Heart right ventricle (tissue), 16 donors: ENCODE measurements at regions of chr14 and their contacts with region 1.

Region 1: DNA sequence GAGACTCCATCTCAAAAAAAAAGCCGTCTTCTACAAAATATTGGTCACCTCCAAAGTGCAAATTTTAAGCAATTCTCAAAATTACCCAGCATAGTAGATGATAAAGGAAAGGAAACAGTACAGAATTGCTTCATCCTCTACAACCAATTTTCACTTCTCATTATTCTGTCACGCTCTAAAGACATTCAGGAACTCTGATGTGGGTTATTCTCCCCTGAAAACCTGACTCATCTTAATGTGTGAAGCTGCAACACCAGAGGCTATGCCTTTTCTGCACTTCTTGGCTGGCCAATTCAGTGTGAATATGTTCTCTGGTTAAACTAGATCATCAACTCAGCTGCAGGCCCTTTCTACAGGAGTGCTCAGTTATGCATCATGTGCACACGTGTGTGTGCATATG is 11.0 kb downstream of the PTGER2 start:
- DNase-seq: no peak
- ATAC-seq: peak in 4 of 8 donors; percentile 23 to 79 (median 30)
- H3K4me3 ChIP-seq: peak overlapping the region in 1 of 10 donors; percentile 12
- H3K27ac ChIP-seq: peak overlapping the region in 1 of 10 donors; percentile 42
- H3K4me1 ChIP-seq: peaks cover 0 to 48% (median 0%) of the 10 kb centered on the region in 9 donors
- H3K27me3 ChIP-seq: no peaks in the 10 kb centered on the region
- CTCF ChIP-seq: no peak

Region 2: DNA sequence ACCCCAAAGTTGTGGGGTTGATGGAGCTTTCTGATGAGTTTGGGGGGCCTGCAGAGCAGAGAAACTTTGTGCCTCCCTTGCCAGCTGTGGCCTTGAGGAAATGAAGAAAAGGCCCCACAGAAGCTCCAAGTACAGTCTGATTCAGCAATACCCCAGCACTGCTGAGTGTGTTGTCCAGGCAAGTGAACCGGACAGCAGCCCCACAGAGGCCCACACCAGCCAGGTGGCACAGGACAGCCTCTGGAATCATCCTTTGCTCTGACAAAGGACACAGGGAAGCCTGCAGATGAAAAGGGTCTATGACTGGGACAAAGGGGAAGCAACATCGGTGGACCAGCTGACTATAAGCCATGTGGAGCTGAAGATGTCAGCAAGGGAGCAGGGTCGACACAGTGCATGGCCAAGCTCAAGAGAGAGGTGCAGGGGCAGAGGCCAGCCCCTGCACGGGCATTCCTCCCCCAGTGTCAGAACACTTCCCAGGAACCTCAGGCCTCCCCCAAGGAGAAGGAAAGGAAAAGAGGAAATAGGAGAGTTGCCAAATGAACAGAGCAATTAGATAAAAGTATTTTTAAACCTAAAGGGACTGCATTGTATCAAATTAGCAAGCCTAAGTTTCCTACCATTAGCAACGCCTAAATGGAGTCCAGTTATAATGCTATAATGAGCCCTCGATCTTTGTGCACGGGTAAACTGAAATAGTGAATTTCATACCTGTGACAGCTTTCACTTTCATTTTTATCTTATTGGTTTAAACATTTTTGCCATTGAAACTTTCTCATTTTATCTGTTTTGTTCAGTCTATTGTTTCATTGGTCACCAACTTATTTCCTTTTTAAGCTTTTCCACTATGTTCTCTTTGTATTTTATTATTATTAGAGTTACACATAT is 104.0 kb before region 1 on chr14:
- intact Hi-C with region 1: no loop called
- DNase-seq: no peak
- ATAC-seq: peak in 2 of 8 donors; percentile 33 to 47
- H3K4me3 ChIP-seq: peak overlapping the region in 7 of 10 donors; percentile 1 to 43 (median 35)
- H3K27ac ChIP-seq: peak overlapping the region in 3 of 10 donors; percentile 6 to 46 (median 41)
- H3K4me1 ChIP-seq: peaks cover 0 to 14% (median 0%) of the 10 kb centered on the region in 9 donors
- H3K27me3 ChIP-seq: no peaks in the 10 kb centered on the region
- CTCF ChIP-seq: no peak

Region 3: DNA sequence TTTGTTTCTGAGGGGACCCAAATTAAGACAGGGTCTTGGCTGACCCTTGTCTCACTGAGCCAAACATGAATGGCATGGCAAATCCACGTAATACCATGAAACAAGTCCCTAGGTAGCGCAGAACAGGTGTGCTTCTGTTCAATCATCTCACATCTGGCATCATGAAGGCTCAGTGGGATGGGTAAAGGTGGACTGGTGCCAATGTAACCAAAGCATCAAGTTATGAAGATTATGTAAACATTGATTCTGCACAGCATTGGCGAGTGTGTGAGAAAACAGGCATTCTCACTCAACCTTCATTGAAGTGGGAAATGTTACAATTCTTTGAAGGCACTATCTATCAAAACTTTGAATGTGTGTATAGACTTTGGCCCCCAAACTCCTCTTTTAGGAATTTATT is 30.9 kb after region 1 on chr14:
- intact Hi-C with region 1: loop called in 1 of 10 experiments (anchors 1 kb)
- DNase-seq: no peak
- ATAC-seq: no peak
- H3K4me3 ChIP-seq: no peak overlapping the region
- H3K27ac ChIP-seq: peak overlapping the region in 1 of 10 donors; percentile 58
- H3K4me1 ChIP-seq: peaks cover 0 to 39% (median 11%) of the 10 kb centered on the region in 9 donors
- H3K27me3 ChIP-seq: peaks cover 0 to 78% (median 0%) of the 10 kb centered on the region in 7 donors
- CTCF ChIP-seq: no peak